Sigmoid colon (tissue), 7 donors: ENCODE measurements at regions of chr4 and their contacts with region 1.

Region 1: DNA sequence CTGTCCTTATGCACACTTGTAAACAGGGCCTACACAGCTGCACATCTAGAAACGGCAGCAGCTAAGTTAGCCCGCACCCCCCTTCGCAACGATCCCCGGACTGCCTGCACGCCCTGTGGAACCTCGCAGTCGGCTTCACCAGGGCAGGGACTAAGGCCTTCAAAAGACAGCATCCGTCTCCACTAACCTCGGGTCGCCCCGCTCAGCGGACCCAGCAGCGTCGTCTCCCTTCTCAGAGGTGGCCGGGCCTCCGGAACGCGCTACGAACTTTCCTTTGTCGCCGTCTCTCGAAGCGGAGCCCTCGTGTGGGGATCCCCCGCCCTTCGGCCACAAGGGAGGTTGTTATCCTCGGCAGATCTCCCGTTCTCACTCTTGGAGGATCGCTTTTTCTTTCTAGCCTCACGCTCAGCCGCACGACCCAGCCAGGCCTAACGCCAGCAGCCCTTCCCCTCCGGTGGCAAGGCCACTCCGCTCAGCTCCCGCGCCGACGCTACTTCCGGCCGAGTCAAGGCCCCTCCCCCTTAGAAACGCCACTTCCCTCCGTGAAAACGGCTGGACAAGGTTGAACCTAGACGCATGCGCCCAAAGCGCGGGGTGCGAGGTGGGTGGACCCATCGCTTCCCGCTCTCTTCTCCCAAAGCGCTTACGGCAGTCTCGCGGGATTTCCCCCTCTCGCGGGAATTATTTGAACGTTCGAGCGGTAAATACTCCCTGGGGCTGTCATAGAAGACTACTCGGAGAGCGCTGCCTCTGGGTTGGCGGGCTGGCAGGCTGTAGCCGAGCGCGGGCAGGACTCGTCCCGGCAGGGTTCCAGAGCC is at the starts of genes DCAF16 and NCAPG:
- DNase-seq: peak; percentile 100
- H3K4me3 ChIP-seq: peak within 1 kb of the TSS; percentile 70 to 95 (median 84)
- H3K27ac ChIP-seq: peak within 1 kb of the TSS; percentile 93 to 98 (median 97)
- H3K4me1 ChIP-seq: peaks cover 0 to 51% (median 48%) of the 10 kb centered on the region in 4 donors
- H3K27me3 ChIP-seq: no peaks in the 10 kb centered on the region
- CTCF ChIP-seq: no peak
- EP300 ChIP-seq: peak in 1 of 4 donors; percentile 11
- POLR2A ChIP-seq: peak; percentile 95 to 96
- total RNA-seq, gene DCAF16: 23.2 to 31.5 (median 25.9) TPM
- total RNA-seq, gene NCAPG: under 0.01 to 0.68 (median 0.47) TPM

Region 2: DNA sequence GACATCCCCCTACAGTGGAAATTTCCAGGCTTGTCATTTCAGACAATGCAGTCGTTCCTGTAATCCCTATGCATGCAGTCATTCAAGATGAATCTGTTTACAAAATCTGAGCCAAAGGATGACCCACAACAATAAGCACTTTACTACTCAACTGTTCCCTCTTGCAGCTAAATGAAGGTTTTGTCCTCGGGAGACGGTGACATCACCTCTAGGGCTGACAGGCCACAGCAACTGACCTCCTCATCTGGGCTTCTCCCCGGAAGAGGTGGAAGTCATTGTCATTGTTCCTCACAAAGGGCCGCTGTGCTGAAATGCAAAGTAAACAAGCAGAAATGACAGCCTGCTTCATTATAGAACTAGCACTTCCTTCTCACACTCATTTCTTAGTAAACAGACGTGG is 266.3 kb before region 1 on chr4:
- intact Hi-C with region 1: loop called (anchors 10 kb)
- DNase-seq: no peak
- H3K4me3 ChIP-seq: no peak overlapping the region
- H3K27ac ChIP-seq: no peak overlapping the region
- H3K4me1 ChIP-seq: no peaks in the 10 kb centered on the region
- H3K27me3 ChIP-seq: no peaks in the 10 kb centered on the region
- CTCF ChIP-seq: no peak
- EP300 ChIP-seq: no peak
- POLR2A ChIP-seq: no peak

Region 3: DNA sequence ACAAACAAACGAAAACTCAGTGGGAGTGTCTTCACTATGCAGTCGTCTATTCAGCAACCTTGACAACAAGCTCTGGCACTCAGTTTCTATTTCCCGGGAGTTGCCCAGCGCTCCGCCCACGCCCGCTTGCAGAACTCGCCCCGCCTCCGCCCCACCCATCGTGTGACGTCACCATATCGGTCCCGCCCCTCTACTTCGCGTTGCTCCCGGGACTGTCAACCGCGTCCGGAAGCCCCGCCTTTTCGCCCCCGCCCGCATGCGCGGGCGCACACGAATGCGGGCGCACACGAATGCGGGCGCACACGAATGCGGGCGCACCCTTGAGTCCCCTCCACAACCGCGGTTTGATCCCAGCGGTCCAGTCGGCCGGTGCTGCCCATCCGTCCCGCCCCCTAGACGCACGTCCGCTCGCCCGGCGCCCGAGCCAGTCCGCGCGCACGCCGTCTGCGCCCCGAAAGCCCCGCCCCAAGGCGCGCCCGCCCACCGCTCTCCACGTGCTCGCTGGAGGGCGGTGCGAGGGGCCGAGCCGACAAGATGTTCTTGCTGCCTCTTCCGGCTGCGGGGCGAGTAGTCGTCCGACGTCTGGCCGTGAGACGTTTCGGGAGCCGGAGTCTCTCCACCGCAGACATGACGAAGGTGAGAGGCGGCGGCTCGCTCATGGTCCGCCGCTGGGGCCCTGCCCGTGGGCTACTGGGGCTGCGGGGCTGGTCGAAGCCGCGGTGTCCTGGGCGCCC is 233.4 kb before region 1 on chr4 and contains the start of gene LAP3:
- intact Hi-C with region 1: loop called (anchors 1 kb)
- DNase-seq: peak; percentile 99
- H3K4me3 ChIP-seq: peak within 1 kb of the TSS; percentile 92 to 96 (median 93)
- H3K27ac ChIP-seq: peak within 1 kb of the TSS; percentile 95 to 99 (median 98)
- H3K4me1 ChIP-seq: peaks cover 0 to 33% (median 28%) of the 10 kb centered on the region in 4 donors
- H3K27me3 ChIP-seq: no peaks in the 10 kb centered on the region
- CTCF ChIP-seq: no peak
- EP300 ChIP-seq: no peak
- POLR2A ChIP-seq: peak; percentile 83 to 89
- total RNA-seq, gene LAP3: 37.1 to 69.9 (median 51.3) TPM

Region 4: DNA sequence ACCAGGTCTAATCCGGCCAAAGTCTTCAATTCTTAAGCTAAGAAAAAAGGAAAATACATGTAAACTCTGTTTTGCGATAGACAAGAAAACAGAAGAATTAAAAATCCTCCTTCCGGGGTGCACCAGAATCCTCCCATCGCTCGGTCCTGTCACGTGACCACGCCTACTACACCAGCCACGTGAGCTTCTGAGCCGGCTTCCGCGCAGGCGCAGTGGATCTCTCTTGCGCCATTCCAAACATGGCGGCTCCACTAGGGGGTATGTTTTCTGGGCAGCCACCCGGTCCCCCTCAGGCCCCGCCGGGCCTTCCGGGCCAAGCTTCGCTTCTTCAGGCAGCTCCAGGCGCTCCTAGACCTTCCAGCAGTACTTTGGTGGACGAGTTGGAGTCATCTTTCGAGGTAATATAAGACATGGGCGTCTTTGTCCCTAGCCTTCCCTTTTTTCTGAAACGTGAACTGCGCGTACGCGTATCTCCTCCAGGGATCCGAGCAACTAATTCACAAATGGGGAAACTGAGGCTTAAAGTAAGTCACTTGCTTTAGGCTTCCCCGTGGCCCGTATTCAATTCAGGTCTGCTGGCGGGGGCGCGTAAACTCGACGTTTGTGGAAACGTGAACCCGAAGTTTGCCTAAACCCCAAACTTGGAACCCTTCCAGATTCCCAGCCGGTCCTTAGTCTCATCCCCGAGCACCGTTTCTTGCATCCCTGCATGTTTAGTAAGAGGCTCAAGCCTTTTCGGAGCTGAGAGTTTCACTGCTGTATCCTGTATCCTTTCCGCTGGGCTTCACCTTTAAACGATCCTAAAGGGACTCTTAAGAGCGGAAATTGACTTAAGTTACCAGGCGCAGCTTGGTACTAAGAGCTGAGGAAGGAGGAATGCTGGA is 195.8 kb before region 1 on chr4 and contains the start of gene MED28:
- intact Hi-C with region 1: loop called (anchors 5 kb)
- DNase-seq: peak; percentile 99
- H3K4me3 ChIP-seq: peak within 1 kb of the TSS; percentile 60 to 96 (median 88)
- H3K27ac ChIP-seq: peak within 1 kb of the TSS; percentile 79 to 90 (median 86)
- H3K4me1 ChIP-seq: peaks cover 0 to 49% (median 41%) of the 10 kb centered on the region in 4 donors
- H3K27me3 ChIP-seq: no peaks in the 10 kb centered on the region
- CTCF ChIP-seq: peak in 2 of 4 experiments; percentile 20 to 30
- EP300 ChIP-seq: no peak
- POLR2A ChIP-seq: peak; percentile 94
- total RNA-seq, gene MED28: 17.1 to 24.0 (median 18.7) TPM

Region 5: GRCh38 chr4:17636696-17637622 is 173.5 kb before region 1 on chr4:
- intact Hi-C with region 1: loop called (anchors 5 kb)
- DNase-seq: peak; percentile 84
- H3K4me3 ChIP-seq: no peak overlapping the region
- H3K27ac ChIP-seq: no peak overlapping the region
- H3K4me1 ChIP-seq: peaks cover 0 to 3% (median 1%) of the 10 kb centered on the region in 4 donors
- H3K27me3 ChIP-seq: peaks cover 0 to 2% (median 0%) of the 10 kb centered on the region in 3 donors
- CTCF ChIP-seq: peak; percentile 55 to 91 (median 66)
- EP300 ChIP-seq: no peak
- POLR2A ChIP-seq: no peak

Region 6: GRCh38 chr4:18021722-18022571 is 211.5 kb after region 1 on chr4 and contains the start of gene LCORL:
- intact Hi-C with region 1: loop called (anchors 1 kb)
- DNase-seq: peak; percentile 97
- H3K4me3 ChIP-seq: peak within 1 kb of the TSS; percentile 87 to 98 (median 96)
- H3K27ac ChIP-seq: peak within 1 kb of the TSS; percentile 92 to 97 (median 96)
- H3K4me1 ChIP-seq: peaks cover 0 to 16% (median 11%) of the 10 kb centered on the region in 4 donors
- H3K27me3 ChIP-seq: no peaks in the 10 kb centered on the region
- CTCF ChIP-seq: no peak
- EP300 ChIP-seq: peak in 1 of 4 donors; percentile 8
- POLR2A ChIP-seq: peak in 1 of 2 donors; percentile 29
- total RNA-seq, gene LCORL: 27.5 to 46.0 (median 31.4) TPM